T-cell (primary cell): ENCODE measurements at regions of chr6 and their contacts with region 1.

Region 1: GRCh38 chr6:144954241-144954556 is 669.1 kb downstream of the UTRN start:
- DNase-seq: no peak
- ATAC-seq: no peak
- H3K4me3 ChIP-seq: no peak overlapping the region
- H3K4me3 Mint-ChIP-seq: no peak overlapping the region
- H3K27ac ChIP-seq: no peak overlapping the region
- H3K27ac Mint-ChIP-seq: no peak overlapping the region
- H3K4me1 ChIP-seq: no peaks in the 10 kb centered on the region
- H3K4me1 Mint-ChIP-seq: no peaks in the 10 kb centered on the region
- H3K27me3 ChIP-seq: no peaks in the 10 kb centered on the region
- H3K27me3 Mint-ChIP-seq: peaks cover 6% of the 10 kb centered on the region in 2 donors

Region 2: GRCh38 chr6:144898052-144898689 is 56.0 kb before region 1 on chr6:
- CTCF ChIA-PET with region 1: no interaction called
- POLR2A ChIA-PET with region 1: no interaction called
- DNase-seq: no peak
- ATAC-seq: no peak
- H3K4me3 ChIP-seq: no peak overlapping the region
- H3K4me3 Mint-ChIP-seq: no peak overlapping the region
- H3K27ac ChIP-seq: no peak overlapping the region
- H3K27ac Mint-ChIP-seq: no peak overlapping the region
- H3K4me1 ChIP-seq: no peaks in the 10 kb centered on the region
- H3K4me1 Mint-ChIP-seq: no peaks in the 10 kb centered on the region
- H3K27me3 ChIP-seq: no peaks in the 10 kb centered on the region
- H3K27me3 Mint-ChIP-seq: peaks cover 4 to 6% of the 10 kb centered on the region in 2 donors

Region 3: GRCh38 chr6:144935181-144935580 is 19.0 kb before region 1 on chr6:
- CTCF ChIA-PET with region 1: interaction called in 1 of 2 experiments, 13 read pairs
- POLR2A ChIA-PET with region 1: no interaction called
- DNase-seq: no peak
- ATAC-seq: no peak
- H3K4me3 ChIP-seq: no peak overlapping the region
- H3K4me3 Mint-ChIP-seq: no peak overlapping the region
- H3K27ac ChIP-seq: no peak overlapping the region
- H3K27ac Mint-ChIP-seq: no peak overlapping the region
- H3K4me1 ChIP-seq: no peaks in the 10 kb centered on the region
- H3K4me1 Mint-ChIP-seq: no peaks in the 10 kb centered on the region
- H3K27me3 ChIP-seq: no peaks in the 10 kb centered on the region
- H3K27me3 Mint-ChIP-seq: peaks cover 0 to 1% of the 10 kb centered on the region in 2 donors

Region 4: DNA sequence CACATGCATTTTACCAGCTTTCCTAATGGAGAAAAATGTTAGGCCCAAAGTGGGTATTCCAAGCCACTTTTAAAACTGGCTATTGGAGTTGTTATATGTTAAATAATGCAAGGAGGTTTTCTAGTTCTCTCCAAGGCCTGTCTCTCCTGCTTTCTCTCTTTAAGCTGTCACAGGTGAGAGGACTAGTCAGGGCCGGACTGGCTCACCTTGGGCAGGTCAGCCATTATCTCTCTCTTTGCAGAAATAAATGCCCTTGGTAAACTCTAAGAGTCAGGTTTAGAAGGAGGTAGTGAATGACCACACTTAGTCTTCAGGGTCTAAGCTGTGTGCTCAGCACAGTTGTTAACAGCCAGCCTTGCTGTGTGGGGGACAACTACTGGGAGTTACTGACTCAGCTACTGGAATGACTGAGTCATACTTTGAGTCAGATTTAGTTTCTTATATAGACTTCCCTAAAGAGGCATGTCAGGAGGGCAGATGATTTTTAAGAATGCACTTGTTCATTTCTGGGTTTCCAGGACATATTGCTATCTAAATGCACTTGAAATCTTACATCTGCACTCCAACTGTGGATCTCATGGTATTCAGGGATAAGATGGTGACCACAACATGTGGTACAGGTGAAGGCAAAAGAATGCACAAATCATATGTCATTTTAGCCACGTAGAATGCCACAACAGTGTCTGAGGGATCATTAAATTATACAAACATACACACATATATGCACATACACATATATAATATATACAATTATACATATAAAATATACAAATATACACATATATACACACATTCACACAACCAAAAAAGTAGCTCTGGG is 61.8 kb after region 1 on chr6:
- CTCF ChIA-PET with region 1: no interaction called
- POLR2A ChIA-PET with region 1: no interaction called
- DNase-seq: no peak
- ATAC-seq: peak in 1 of 4 experiments; percentile 19
- H3K4me3 ChIP-seq: no peak overlapping the region
- H3K4me3 Mint-ChIP-seq: no peak overlapping the region
- H3K27ac ChIP-seq: no peak overlapping the region
- H3K27ac Mint-ChIP-seq: no peak overlapping the region
- H3K4me1 ChIP-seq: no peaks in the 10 kb centered on the region
- H3K4me1 Mint-ChIP-seq: no peaks in the 10 kb centered on the region
- H3K27me3 ChIP-seq: no peaks in the 10 kb centered on the region
- H3K27me3 Mint-ChIP-seq: peaks cover 4 to 5% of the 10 kb centered on the region in 2 donors